ENCODE measurements at regions of chr19 and their contacts with region 1.

Region 1: GRCh38 chr19:4534836-4535658 is at the start of gene PLIN5:
- DNase-seq: peak; percentile 77
- H3K27ac ChIP-seq: no peak within 1 kb of the TSS
- CTCF ChIP-seq: no peak

Region 2: GRCh38 chr19:4524808-4525562 is 10.1 kb before region 1 on chr19:
- CTCF ChIA-PET with region 1: interaction called, 24 read pairs
- POLR2A ChIA-PET with region 1: no interaction called
- DNase-seq: peak; percentile 49
- H3K27ac ChIP-seq: no peak overlapping the region
- CTCF ChIP-seq: peak; percentile 80

Measured in RWPE1 (cell line).